ENCODE measurements at regions of chr2 and their contacts with region 1.

Region 1: DNA sequence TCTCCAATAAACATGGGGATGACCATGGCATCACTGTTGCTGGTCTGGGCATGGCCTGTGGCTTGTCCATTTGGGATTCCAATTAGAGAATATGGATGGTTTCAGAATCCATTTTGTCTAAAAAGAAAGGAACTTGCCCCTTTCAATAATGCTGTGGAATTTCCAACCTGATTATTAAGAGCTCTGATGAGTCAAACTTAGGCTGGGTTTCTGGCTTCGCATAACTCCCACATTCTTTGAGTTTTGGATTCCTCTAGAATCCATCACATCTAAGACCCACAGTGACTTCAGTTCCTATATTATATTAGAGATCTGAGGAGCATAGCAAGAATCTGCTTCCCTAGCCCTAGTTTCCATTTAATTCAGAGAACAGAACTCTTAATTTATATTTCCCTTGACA is 531.5 kb downstream of the TNS1 start:
- DNase-seq: no peak
- ATAC-seq: no peak
- H3K4me3 ChIP-seq: no peak overlapping the region
- H3K27ac ChIP-seq: no peak overlapping the region
- H3K4me1 ChIP-seq: no peaks in the 10 kb centered on the region
- H3K27me3 ChIP-seq: no peaks in the 10 kb centered on the region
- CTCF ChIP-seq: no peak

Region 2: DNA sequence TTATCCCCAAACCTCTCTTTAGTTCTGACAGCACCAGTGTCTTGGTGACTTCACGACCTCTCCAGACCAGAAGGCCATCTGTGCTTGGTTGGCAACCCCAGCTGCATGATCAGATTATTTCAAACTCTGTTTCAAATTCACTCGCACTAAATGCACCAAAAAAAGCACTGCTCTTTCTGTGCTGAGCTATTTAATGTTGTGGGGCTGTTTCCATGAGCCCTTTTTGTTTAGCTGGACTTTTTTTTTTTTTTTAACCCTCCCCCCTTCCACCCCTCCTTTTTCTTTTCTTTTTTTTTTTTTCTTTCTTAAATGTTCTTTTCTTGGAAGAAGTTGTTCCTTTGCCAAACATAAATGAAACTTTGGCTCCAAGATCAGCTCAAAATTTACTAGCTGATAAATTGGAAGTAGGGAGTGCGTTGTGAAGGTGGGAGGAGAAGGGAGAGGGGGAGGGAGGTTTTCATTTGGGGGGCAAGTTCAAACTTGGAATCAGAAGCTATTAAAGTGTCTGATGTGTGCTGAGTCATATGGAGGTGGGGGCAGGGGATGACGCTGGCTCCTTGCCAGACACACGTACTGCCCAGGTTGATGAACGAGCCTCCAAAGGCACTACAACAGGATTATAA is 68.4 kb before region 1 on chr2:
- CTCF ChIA-PET with region 1: no interaction called
- POLR2A ChIA-PET with region 1: interaction called, 15 read pairs
- in situ Hi-C with region 1: no loop called
- intact Hi-C with region 1: no loop called
- DNase-seq: no peak
- ATAC-seq: no peak
- H3K4me3 ChIP-seq: no peak overlapping the region
- H3K27ac ChIP-seq: no peak overlapping the region
- H3K4me1 ChIP-seq: no peaks in the 10 kb centered on the region
- H3K27me3 ChIP-seq: no peaks in the 10 kb centered on the region
- CTCF ChIP-seq: no peak

Region 3: DNA sequence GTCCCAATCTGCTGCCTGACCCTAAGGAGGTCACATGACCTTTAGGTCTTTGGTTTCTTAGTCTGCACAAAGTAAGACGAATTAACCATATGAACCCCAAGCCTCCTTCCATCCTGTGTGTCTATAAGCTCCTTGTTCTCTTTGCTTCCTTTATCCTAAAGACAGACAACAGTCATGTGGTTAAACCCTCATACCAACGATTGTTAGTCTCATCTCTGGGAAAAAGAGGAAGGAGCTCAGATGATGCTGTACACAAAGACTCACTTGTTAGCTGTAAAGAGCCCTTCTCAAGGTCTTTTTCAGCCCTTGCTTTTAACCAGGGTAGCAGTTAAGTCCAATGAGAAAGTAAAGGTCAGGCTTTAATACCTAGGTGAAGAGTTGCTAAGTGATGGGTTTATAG is 87.8 kb after region 1 on chr2:
- CTCF ChIA-PET with region 1: no interaction called
- POLR2A ChIA-PET with region 1: no interaction called
- in situ Hi-C with region 1: no loop called
- intact Hi-C with region 1: no loop called
- DNase-seq: no peak
- ATAC-seq: no peak
- H3K4me3 ChIP-seq: no peak overlapping the region
- H3K27ac ChIP-seq: no peak overlapping the region
- H3K4me1 ChIP-seq: no peaks in the 10 kb centered on the region
- H3K27me3 ChIP-seq: no peaks in the 10 kb centered on the region
- CTCF ChIP-seq: no peak